Natural killer cell (primary cell): ENCODE measurements at regions of chr2 and their contacts with region 1.

Region 1: GRCh38 chr2:197499594-197500526 is at the starts of genes HSPD1 and HSPE1:
- DNase-seq: peak; percentile 93 to 98
- ATAC-seq: peak; percentile 84 to 95 (median 86)
- H3K4me3 ChIP-seq: peak within 1 kb of the TSS; percentile 85
- H3K4me3 Mint-ChIP-seq: peak within 1 kb of the TSS; percentile 88
- H3K27ac ChIP-seq: peak within 1 kb of the TSS; percentile 95
- H3K27ac Mint-ChIP-seq: peak within 1 kb of the TSS; percentile 94
- H3K4me1 ChIP-seq: peaks cover 26% of the 10 kb centered on the region
- H3K4me1 Mint-ChIP-seq: peaks cover 39 to 48% of the 10 kb centered on the region in 2 donors
- H3K27me3 ChIP-seq: no peaks in the 10 kb centered on the region
- H3K27me3 Mint-ChIP-seq: no peaks in the 10 kb centered on the region
- CTCF ChIP-seq: no peak
- total RNA-seq, gene HSPD1: 79.7 to 130 (median 113) TPM
- total RNA-seq, gene HSPE1: 47.6 to 70.7 (median 50.7) TPM

Region 2: GRCh38 chr2:197339496-197340220 is 160.2 kb before region 1 on chr2:
- intact Hi-C with region 1: no loop called
- DNase-seq: no peak
- ATAC-seq: no peak
- H3K4me3 ChIP-seq: no peak overlapping the region
- H3K4me3 Mint-ChIP-seq: no peak overlapping the region
- H3K27ac ChIP-seq: no peak overlapping the region
- H3K27ac Mint-ChIP-seq: no peak overlapping the region
- H3K4me1 ChIP-seq: no peaks in the 10 kb centered on the region
- H3K4me1 Mint-ChIP-seq: no peaks in the 10 kb centered on the region
- H3K27me3 ChIP-seq: no peaks in the 10 kb centered on the region
- H3K27me3 Mint-ChIP-seq: peaks cover 0 to 3% of the 10 kb centered on the region in 2 donors
- CTCF ChIP-seq: no peak

Region 3: GRCh38 chr2:197399887-197400540 is 99.8 kb before region 1 on chr2:
- intact Hi-C with region 1: no loop called
- DNase-seq: no peak
- ATAC-seq: no peak
- H3K4me3 ChIP-seq: no peak overlapping the region
- H3K4me3 Mint-ChIP-seq: no peak overlapping the region
- H3K27ac ChIP-seq: no peak overlapping the region
- H3K27ac Mint-ChIP-seq: peak overlapping the region in 1 of 2 donors; percentile 74
- H3K4me1 ChIP-seq: no peaks in the 10 kb centered on the region
- H3K4me1 Mint-ChIP-seq: no peaks in the 10 kb centered on the region
- H3K27me3 ChIP-seq: no peaks in the 10 kb centered on the region
- H3K27me3 Mint-ChIP-seq: no peaks in the 10 kb centered on the region
- CTCF ChIP-seq: no peak

Region 4: DNA sequence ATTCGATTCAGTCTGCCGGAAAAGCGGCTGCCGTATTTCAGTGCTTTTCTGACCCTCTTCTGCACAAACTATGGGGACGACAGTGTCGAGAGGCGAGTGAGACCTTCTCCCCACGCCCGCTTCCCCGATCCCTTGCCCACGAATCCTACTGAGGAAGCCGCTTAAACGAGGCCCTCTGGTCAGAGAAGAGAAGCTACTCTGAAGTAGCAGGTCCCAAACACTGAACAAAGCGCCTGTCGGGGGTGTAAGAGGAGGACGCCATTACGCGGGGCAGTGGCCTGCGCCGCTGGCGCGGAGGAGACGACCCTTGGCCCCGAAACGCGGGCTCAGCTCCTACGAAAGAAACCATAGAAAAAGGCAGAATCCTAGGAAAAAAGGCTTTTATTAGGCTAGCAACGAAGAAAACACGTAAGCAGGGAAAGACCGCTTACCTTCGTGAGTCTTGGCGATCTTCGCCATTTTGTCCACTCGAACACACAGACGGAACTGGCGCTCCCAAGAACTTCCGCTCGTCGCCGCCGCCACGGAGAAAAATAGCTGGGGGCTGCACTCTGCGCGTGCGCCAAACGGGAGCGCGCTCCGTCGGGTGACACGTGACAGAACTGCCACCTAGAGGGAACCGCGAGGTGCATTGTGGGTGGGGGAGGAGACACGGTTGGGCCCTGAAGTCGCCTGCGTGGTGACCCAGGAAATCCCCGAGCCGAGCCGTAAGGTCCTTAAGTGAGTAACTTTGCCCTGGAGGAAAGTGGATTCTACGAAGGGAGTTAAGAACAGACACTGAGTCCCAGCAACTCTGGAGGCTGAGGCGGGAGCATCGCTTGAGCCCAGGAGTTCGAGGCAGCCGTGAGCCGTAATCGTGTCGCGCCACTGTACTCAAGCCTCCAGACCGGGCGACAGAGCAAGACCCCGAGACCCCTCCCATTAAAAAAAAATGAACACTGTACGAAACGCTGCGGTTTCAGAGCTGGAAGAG is 65.0 kb before region 1 on chr2 and contains the start of gene SF3B1:
- intact Hi-C with region 1: loop called (anchors 1 kb)
- DNase-seq: peak; percentile 99 to 100
- ATAC-seq: peak; percentile 94 to 99 (median 97)
- H3K4me3 ChIP-seq: peak within 1 kb of the TSS; percentile 92
- H3K4me3 Mint-ChIP-seq: peak within 1 kb of the TSS; percentile 98
- H3K27ac ChIP-seq: peak within 1 kb of the TSS; percentile 97
- H3K27ac Mint-ChIP-seq: peak within 1 kb of the TSS; percentile 98 to 100
- H3K4me1 ChIP-seq: peaks cover 30% of the 10 kb centered on the region
- H3K4me1 Mint-ChIP-seq: peaks cover 60 to 64% of the 10 kb centered on the region in 2 donors
- H3K27me3 ChIP-seq: no peaks in the 10 kb centered on the region
- H3K27me3 Mint-ChIP-seq: no peaks in the 10 kb centered on the region
- CTCF ChIP-seq: no peak
- total RNA-seq, gene SF3B1: 387 to 472 (median 447) TPM

Region 5: DNA sequence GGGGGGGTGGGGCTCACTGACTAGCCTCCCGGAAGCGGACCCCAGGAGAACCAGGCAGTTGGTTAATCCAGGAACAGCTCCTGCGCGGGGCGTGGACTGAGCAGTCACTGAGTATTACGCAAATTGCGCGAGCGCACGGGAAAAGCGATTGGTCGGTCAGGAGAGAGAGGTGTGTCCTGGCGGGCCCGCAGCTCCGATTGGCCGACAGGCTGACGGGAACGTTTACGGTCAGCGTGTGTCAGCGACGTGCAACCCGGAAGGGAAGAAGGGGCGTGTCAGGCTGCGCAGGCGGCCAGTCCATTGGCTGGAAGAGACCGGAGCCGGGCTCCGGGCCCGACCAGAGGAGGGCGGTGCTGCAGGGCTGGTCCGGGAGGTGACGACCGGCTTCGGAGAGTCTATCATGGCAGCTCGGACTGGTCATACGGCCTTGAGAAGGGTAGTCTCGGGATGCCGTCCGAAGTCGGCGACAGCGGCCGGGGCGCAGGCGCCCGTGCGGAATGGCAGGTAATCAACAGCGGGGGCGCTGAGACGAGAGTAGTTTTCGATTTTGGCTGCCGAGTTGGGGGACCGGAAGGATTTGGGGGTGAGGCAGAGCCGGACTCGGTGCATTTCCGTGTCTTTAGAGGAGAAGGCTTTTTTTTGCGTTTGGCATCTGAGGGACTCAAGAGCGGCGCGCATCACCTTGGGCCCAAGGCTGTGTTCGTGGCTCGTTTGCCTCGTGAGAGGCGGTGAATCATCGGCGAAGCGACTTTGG is 46.5 kb before region 1 on chr2 and contains the start of gene COQ10B:
- intact Hi-C with region 1: loop called (anchors 1 kb)
- DNase-seq: peak; percentile 97 to 100
- ATAC-seq: peak; percentile 80 to 95 (median 84)
- H3K4me3 ChIP-seq: peak within 1 kb of the TSS; percentile 81
- H3K4me3 Mint-ChIP-seq: peak within 1 kb of the TSS; percentile 99
- H3K27ac ChIP-seq: peak within 1 kb of the TSS; percentile 98
- H3K27ac Mint-ChIP-seq: peak within 1 kb of the TSS; percentile 100
- H3K4me1 ChIP-seq: peaks cover 5% of the 10 kb centered on the region
- H3K4me1 Mint-ChIP-seq: peaks cover 46 to 54% of the 10 kb centered on the region in 2 donors
- H3K27me3 ChIP-seq: no peaks in the 10 kb centered on the region
- H3K27me3 Mint-ChIP-seq: no peaks in the 10 kb centered on the region
- CTCF ChIP-seq: no peak
- total RNA-seq, gene COQ10B: 64.6 to 79.2 (median 72.5) TPM

Region 6: GRCh38 chr2:197487385-197487784 is 12.5 kb before region 1 on chr2:
- intact Hi-C with region 1: no loop called
- DNase-seq: no peak
- ATAC-seq: no peak
- H3K4me3 ChIP-seq: no peak overlapping the region
- H3K4me3 Mint-ChIP-seq: no peak overlapping the region
- H3K27ac ChIP-seq: no peak overlapping the region
- H3K27ac Mint-ChIP-seq: peak overlapping the region in 1 of 2 donors; percentile 50
- H3K4me1 ChIP-seq: no peaks in the 10 kb centered on the region
- H3K4me1 Mint-ChIP-seq: no peaks in the 10 kb centered on the region
- H3K27me3 ChIP-seq: no peaks in the 10 kb centered on the region
- H3K27me3 Mint-ChIP-seq: no peaks in the 10 kb centered on the region
- CTCF ChIP-seq: no peak

Region 7: DNA sequence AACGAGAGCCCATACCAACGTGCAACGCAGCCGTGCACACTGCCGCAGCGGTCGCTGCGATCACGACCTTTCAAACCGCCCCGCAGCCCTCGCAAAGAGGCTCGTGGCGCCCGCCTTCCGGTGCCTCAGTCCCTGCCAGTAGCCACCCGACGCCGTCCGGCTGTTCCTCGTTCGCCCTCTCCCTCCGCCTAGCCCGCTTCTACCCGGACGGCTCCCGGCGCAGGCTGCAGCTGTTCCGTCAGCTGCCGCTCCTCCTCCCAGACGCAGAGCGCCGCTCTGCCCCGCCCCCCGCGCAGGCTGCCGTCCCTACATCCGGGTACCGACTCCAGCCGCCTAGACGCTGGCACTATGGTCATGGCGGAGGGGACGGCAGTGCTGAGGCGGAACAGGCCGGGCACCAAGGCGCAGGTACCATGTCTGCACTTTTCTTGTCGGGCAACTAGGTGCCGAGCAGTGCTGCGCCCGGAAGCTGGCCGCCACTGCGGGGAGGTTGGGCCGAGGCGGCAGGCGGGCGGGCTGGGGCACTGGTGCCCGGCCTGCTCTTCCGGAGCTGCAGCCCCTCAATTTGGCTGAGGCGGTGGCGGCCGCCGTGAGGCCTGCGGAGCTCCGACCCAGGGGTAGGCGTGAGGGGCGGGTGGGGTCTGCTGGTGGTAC is 16.0 kb after region 1 on chr2 and contains the start of gene MOB4:
- intact Hi-C with region 1: loop called (anchors 1 kb)
- DNase-seq: peak; percentile 97
- ATAC-seq: peak; percentile 89 to 97 (median 92)
- H3K4me3 ChIP-seq: peak within 1 kb of the TSS; percentile 64
- H3K4me3 Mint-ChIP-seq: peak within 1 kb of the TSS; percentile 92
- H3K27ac ChIP-seq: peak within 1 kb of the TSS; percentile 88
- H3K27ac Mint-ChIP-seq: peak within 1 kb of the TSS; percentile 90 to 97
- H3K4me1 ChIP-seq: peaks cover 20% of the 10 kb centered on the region
- H3K4me1 Mint-ChIP-seq: peaks cover 36 to 39% of the 10 kb centered on the region in 2 donors
- H3K27me3 ChIP-seq: no peaks in the 10 kb centered on the region
- H3K27me3 Mint-ChIP-seq: no peaks in the 10 kb centered on the region
- CTCF ChIP-seq: no peak
- total RNA-seq, gene MOB4: 27.1 to 40.0 (median 34.9) TPM